PC-3 (cell line): ENCODE measurements at regions of chr11 and their contacts with region 1.

Region 1: DNA sequence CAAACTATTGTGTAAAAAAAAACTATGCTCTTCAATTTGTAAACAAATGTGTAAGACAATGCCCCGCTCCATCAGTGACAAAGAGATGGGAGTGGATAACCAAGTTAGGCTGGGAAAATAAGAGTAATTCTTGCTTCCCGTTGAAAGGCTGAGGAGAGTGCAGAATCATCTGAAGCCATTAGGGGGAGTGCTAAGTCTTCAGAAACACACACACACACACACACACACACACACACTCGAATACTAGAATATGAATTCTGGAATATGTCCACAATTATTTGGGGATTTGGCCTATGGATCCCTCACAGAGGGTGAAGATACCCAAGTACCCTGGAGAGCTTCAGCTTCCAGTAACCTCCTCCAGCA is 27.8 kb upstream of the ROBO3 start:
- DNase-seq: peak; percentile 93
- ATAC-seq: peak; percentile 21
- H3K4me3 ChIP-seq: peak overlapping the region; percentile 20
- H3K27ac ChIP-seq: no peak overlapping the region
- H3K4me1 ChIP-seq: peaks cover 58% of the 10 kb centered on the region
- H3K27me3 ChIP-seq: peaks cover 36% of the 10 kb centered on the region
- CTCF ChIP-seq: peak; percentile 69

Region 2: DNA sequence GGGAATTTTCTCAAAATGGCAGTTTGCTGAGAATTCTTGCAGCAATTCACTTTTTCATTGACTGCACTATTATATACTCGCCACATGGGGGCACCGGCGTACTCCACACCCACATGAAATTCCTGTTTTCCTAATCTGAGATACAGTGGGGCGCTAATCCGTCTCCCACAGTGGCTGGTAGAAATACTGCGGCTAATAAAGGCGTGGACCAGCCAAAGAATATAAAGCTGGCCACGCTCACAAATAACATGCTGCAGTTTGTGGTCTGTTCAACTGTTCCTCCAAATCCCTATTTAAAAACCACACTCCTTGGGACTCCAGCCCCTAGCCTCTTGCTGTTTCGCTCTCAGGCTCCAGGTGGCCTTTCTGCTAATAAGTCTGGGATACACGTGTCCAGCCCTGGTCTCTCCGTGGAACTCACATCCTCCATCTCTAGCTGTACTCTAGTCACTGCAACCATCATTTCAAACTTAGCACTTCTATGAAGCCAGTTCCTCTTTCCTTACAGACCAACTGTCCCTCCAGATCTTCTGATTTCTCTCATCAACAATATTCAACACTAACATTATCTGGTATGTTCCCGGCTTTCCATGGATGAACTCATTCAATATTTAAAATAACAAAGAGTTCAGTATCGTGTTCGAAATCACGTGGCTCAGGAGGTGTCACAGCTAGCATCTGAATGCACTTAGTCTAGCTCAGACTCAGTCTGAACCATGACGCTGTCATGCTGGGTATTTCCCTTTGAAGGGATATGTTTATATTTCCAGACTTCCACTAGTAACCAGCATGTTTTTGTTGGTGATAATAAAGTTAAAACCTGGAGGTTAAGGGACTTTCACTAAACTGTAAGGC is 192.8 kb before region 1 on chr11:
- CTCF ChIA-PET with region 1: interaction called, 4 read pairs
- POLR2A ChIA-PET with region 1: no interaction called
- intact Hi-C with region 1: loop called (anchors 1 kb)
- DNase-seq: peak; percentile 72
- ATAC-seq: peak; percentile 93
- H3K4me3 ChIP-seq: peak overlapping the region; percentile 57
- H3K27ac ChIP-seq: no peak overlapping the region
- H3K4me1 ChIP-seq: peaks cover 9% of the 10 kb centered on the region; the same call in 1 of the 2 replicates
- H3K27me3 ChIP-seq: no peaks in the 10 kb centered on the region
- CTCF ChIP-seq: peak; percentile 97

Region 3: DNA sequence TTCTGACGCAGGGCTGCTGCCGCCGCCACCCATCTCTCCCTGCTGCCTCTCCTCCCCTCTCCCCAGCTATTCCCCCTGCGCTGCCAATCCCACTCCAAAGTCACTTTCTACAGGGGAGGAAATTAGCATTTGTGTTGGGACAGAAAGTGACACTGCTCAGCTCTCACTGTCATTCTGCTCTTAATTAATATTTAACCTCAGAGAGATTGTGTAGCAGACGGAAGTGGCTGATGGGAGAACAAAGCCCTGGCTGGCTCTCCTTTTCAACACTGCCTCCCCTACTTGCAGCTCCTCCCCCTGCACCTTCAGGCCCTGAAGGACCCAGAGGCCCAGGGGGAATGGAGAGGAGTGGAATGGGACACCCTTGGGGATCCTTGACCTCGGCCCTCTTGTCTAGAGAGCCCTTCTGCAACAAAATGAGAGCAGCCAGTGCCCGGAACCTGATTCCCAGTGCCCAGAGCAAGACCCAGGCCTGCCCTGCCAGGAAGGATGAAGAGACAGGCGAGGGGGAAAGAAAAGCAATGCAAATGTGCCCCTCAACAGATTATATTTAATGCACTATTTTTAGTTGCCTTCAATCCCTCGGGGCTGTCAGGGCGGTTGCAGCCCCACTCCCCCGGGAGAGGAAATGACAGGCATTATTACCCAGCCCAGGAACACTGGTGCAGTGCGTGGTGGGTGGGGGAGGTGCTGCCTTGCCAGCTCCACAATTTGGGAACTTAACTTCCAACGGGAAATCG is 112.3 kb before region 1 on chr11:
- CTCF ChIA-PET with region 1: no interaction called
- POLR2A ChIA-PET with region 1: no interaction called
- intact Hi-C with region 1: no loop called
- DNase-seq: no peak
- ATAC-seq: peak; percentile 62
- H3K4me3 ChIP-seq: peak overlapping the region; percentile 18; the same call in 1 of the 2 replicates
- H3K27ac ChIP-seq: peak overlapping the region; percentile 34
- H3K4me1 ChIP-seq: peaks cover 15% of the 10 kb centered on the region
- H3K27me3 ChIP-seq: no peaks in the 10 kb centered on the region
- CTCF ChIP-seq: no peak

Region 4: GRCh38 chr11:124746621-124747243 is 90.7 kb before region 1 on chr11:
- CTCF ChIA-PET with region 1: interaction called, 10 read pairs
- POLR2A ChIA-PET with region 1: no interaction called
- intact Hi-C with region 1: loop called (anchors 1 kb)
- DNase-seq: peak; percentile 79
- ATAC-seq: peak; percentile 83
- H3K4me3 ChIP-seq: peak overlapping the region; percentile 67
- H3K27ac ChIP-seq: no peak overlapping the region
- H3K4me1 ChIP-seq: peaks cover 36% of the 10 kb centered on the region
- H3K27me3 ChIP-seq: no peaks in the 10 kb centered on the region
- CTCF ChIP-seq: peak; percentile 74

Region 5: DNA sequence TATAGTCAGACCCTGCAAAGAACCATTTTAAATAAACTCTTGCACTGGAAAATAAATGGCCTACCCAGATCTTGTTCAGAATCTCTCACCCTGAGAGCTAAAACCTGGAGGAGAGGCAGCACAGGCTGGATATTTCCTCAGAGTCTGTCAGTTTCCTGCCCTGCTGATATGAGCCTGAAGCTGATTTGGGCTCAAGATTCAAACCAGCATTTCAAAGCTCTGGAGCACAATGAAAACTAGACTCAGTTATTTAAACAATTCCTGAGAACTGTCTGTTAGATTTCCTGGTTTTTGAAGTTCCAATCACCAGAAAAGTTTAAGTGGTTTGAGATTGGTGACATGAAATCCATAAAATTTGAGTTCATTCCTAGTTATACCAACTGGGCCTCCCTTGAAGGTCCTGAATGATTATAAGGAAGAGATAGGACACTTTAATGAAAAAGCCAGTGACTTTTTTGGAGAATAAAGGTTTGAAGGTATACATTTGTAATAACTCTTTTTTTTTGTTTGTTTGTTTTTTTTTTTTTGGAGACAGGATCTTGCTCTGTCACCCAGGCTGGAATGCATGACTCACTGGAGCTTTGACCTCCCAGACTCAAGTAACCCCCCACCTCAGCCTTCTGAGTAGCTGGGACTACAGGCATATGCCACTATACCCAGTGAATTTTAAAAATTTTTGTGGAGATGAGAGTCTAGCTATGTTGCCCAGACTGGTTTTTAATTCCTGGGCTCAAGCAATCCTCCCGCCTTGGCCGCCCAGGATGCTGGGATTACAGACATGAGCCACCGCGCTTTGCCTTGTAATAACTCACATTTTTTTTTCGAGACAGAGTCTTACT is 67.5 kb before region 1 on chr11:
- CTCF ChIA-PET with region 1: interaction called, 13 read pairs
- POLR2A ChIA-PET with region 1: no interaction called
- intact Hi-C with region 1: loop called (anchors 1 kb)
- DNase-seq: peak; percentile 90
- ATAC-seq: peak; percentile 90
- H3K4me3 ChIP-seq: no peak overlapping the region
- H3K27ac ChIP-seq: peak overlapping the region; percentile 59
- H3K4me1 ChIP-seq: peaks cover 32% of the 10 kb centered on the region
- H3K27me3 ChIP-seq: no peaks in the 10 kb centered on the region
- CTCF ChIP-seq: no peak

Region 6: GRCh38 chr11:124800226-124800929 is 37.1 kb before region 1 on chr11 and contains the start of gene MSANTD2:
- CTCF ChIA-PET with region 1: interaction called, 48 read pairs
- POLR2A ChIA-PET with region 1: interaction called, 5 read pairs
- intact Hi-C with region 1: loop called (anchors 1 kb)
- DNase-seq: peak; percentile 76
- ATAC-seq: peak; percentile 77
- H3K4me3 ChIP-seq: peak within 1 kb of the TSS; percentile 70
- H3K27ac ChIP-seq: peak within 1 kb of the TSS; percentile 83
- H3K4me1 ChIP-seq: peaks cover 39% of the 10 kb centered on the region
- H3K27me3 ChIP-seq: no peaks in the 10 kb centered on the region
- CTCF ChIP-seq: no peak
- total RNA-seq, gene MSANTD2: 29.5 and 32.6 TPM in 2 replicates

Region 7: DNA sequence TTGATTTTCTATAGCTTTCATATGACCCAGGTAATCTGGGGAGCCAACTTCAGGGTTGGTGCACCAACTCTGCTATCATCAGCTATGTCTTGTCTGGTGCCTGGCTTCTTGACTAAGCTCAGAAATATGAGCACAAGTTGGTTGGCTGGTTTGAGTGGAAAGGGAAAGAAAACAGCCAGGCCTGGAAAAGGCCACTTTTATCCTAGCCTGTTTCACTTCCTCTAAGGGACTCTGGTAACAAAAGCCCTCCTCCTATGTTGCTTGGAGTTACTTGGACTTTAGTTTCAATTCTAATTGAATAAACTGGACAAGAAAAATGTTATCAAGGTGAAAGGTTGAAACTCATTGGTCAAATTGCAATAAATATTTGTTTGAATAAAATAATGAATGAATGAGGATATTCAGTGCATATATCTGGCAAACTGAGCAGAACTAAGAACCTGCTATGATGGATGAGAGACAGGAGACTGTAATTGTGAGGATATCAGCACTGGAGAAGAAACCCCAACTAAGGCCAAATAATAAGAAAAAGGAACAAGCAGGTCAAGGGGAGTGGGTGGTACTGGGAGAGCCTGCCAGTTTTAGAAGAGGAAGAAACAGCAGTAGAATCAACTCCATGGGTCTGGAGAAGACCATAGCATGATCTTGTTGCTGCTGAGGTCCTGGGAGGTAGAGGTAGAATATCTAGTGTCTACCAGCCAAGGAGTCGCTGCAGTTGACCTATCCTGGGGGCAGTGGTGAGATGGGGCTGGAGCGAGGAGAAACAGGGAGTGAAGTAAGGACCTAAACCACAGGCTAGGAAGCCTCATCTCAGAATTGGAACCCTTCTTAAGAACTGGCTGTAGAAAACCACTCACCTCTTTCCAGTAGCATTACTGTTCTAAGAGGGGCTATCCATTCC is 52.0 kb after region 1 on chr11:
- CTCF ChIA-PET with region 1: no interaction called
- POLR2A ChIA-PET with region 1: no interaction called
- intact Hi-C with region 1: no loop called
- DNase-seq: no peak
- ATAC-seq: no peak
- H3K4me3 ChIP-seq: no peak overlapping the region
- H3K27ac ChIP-seq: no peak overlapping the region
- H3K4me1 ChIP-seq: peaks cover 2% of the 10 kb centered on the region; the same call in 1 of the 2 replicates
- H3K27me3 ChIP-seq: no peaks in the 10 kb centered on the region
- CTCF ChIP-seq: no peak

Region 8: GRCh38 chr11:124900464-124900863 is 63.0 kb after region 1 on chr11:
- CTCF ChIA-PET with region 1: no interaction called
- POLR2A ChIA-PET with region 1: interaction called, 4 read pairs
- intact Hi-C with region 1: loop called (anchors 1 kb)
- DNase-seq: peak; percentile 98
- ATAC-seq: peak; percentile 60
- H3K4me3 ChIP-seq: peak overlapping the region; percentile 41; the same call in 1 of the 2 replicates
- H3K27ac ChIP-seq: peak overlapping the region; percentile 88
- H3K4me1 ChIP-seq: peaks cover 73% of the 10 kb centered on the region
- H3K27me3 ChIP-seq: no peaks in the 10 kb centered on the region
- CTCF ChIP-seq: no peak